ENCODE measurements at regions of chr1 and their contacts with region 1.

Region 1: DNA sequence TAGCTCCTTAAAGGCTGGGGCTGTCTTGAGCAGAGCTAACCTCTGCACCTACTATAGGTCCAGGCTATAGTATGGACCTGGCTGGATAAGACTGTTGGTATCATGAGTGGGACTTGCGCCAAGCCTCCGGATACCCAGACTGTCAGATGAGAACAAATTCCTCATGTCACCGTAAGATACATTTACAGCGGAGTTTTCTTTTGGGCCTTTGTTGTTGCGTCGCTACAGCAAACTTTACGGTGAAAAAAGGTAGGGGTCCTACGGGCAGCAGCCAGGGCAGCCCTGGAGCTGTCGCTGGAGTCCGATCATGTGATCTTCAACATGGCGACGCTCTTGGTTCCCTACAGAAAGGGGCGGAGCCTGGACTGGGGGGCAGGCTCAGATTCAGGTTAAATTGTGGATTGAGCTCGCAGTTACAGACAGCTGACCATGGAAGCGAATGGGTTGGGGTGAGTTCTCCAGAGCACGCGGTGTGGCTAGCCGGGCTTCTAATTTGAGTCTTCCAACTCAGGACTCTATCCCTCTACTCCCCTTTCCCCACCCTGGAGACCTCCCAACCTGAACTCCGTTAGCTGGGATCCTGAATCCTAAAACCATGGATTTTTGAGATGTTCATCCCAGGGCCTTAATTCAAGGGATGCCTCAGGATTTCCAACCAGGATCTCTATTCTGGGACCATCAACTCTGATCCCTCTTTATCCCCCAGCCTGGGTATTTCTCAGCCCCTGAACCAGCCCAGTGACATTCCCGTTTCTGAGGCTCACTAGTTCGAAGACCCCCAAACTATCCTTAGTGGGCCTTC is at the start of gene UROD:
- DNase-seq: peak; percentile 94
- H3K4me3 Mint-ChIP-seq: peak within 1 kb of the TSS; percentile 81
- H3K27ac Mint-ChIP-seq: peak within 1 kb of the TSS; percentile 85
- H3K4me1 Mint-ChIP-seq: peaks cover 47% of the 10 kb centered on the region
- H3K27me3 Mint-ChIP-seq: no peaks in the 10 kb centered on the region
- total RNA-seq, gene UROD: 67.1 to 74.9 TPM

Region 2: DNA sequence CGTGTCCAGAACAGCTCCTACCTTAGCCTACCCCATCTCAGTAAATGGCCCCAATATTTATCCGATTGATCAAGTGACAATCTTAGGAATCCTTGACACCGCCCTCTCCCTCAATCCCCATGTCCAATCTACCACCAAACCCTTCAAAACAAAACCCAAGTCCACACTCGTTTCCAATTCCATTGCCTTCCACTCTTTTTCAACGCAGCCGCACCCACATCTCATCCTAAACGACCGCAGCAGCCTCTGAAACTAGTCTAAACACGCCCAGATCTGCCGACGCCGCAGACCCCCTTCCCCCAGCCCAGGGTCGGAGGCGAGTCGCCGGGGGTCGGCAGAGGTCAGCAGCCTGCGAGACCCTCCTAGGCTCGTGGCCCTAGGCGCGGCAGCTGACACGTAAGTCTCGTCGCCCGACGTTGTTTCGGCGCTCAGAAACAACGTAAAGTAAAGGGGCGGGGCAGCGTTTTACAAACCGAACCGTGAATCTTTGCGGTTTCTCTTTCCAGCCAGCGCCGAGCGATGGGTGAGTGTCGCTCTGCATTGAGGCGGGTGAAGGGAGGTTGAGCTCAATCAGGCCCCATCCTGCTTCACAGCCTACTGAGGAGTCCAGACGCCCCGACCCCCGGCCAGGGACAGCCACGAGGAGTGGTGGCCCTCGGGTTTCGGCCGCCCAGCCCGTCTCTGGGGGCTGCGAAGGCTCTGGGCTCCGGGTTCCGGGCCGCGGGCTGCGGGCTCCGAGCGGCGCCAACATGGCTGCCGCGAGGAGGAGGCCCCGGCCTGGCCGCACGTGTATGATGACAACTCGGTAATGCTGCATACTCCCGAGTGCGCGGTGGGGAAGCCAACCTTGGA is 236.7 kb before region 1 on chr1 and contains the start of gene RPS8:
- CTCF ChIA-PET with region 1: no interaction called
- POLR2A ChIA-PET with region 1: interaction called, 41 read pairs
- DNase-seq: peak; percentile 93
- H3K4me3 Mint-ChIP-seq: peak within 1 kb of the TSS; percentile 90
- H3K27ac Mint-ChIP-seq: peak within 1 kb of the TSS; percentile 90
- H3K4me1 Mint-ChIP-seq: peaks cover 35% of the 10 kb centered on the region
- H3K27me3 Mint-ChIP-seq: no peaks in the 10 kb centered on the region
- total RNA-seq, gene RPS8: 1,610 to 1,658 TPM

Region 3: GRCh38 chr1:44799770-44800584 is 212.1 kb before region 1 on chr1 and contains the start of gene PLK3:
- CTCF ChIA-PET with region 1: interaction called, 27 read pairs
- POLR2A ChIA-PET with region 1: interaction called, 40 read pairs
- DNase-seq: peak; percentile 98
- H3K4me3 Mint-ChIP-seq: peak within 1 kb of the TSS; percentile 90
- H3K27ac Mint-ChIP-seq: peak within 1 kb of the TSS; percentile 98
- H3K4me1 Mint-ChIP-seq: peaks cover 47% of the 10 kb centered on the region
- H3K27me3 Mint-ChIP-seq: no peaks in the 10 kb centered on the region
- total RNA-seq, gene PLK3: 62.8 to 63.5 TPM

Region 4: DNA sequence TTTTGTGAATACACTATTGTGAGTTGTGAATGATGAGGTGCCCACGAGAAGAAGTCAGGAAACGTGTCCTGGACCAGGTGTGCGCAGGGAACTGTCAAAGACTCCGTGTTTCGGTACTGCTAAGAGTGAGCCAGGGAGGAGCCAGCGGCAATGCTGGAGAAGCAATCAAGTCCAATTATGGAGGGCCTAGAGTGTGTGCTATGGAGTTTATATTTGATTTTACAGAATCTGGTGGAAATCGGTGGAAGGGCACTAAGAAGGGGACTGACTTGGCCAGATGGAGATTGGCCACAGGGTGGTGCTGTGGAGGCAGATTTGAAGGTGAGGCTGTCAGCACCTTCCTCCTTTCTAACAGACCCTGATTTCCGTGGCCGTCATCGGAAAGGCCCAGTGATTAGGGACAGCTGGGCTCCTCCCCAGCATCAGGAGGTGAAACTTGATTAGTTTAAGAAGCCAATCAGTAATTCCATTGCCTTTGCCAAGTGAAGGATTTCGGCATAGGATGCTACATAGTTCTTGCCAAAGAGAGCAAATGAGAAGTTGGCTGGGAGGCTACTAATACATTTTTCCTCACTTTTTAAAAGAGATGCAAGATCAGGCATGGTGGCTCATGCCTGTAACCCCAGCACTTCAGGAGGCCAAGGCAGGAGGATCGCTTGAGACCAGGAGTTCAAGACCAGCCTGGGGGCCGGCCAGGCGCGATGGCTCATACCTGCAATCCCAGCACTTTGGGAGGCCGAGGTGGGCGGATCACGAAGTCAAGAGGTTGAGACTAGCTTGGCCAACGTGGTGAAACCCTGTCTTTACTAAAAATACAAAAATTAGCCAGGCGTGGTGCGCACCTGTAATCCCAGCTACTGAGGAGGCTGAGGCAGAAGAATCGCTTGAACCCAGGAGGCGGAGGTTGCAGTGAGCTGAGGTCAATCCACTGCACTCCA is 176.0 kb before region 1 on chr1:
- CTCF ChIA-PET with region 1: interaction called, 16 read pairs
- POLR2A ChIA-PET with region 1: interaction called, 6 read pairs
- DNase-seq: peak; percentile 90
- H3K4me3 Mint-ChIP-seq: no peak overlapping the region
- H3K27ac Mint-ChIP-seq: no peak overlapping the region
- H3K4me1 Mint-ChIP-seq: peaks cover 7% of the 10 kb centered on the region
- H3K27me3 Mint-ChIP-seq: peaks cover under 1% of the 10 kb centered on the region

Region 5: DNA sequence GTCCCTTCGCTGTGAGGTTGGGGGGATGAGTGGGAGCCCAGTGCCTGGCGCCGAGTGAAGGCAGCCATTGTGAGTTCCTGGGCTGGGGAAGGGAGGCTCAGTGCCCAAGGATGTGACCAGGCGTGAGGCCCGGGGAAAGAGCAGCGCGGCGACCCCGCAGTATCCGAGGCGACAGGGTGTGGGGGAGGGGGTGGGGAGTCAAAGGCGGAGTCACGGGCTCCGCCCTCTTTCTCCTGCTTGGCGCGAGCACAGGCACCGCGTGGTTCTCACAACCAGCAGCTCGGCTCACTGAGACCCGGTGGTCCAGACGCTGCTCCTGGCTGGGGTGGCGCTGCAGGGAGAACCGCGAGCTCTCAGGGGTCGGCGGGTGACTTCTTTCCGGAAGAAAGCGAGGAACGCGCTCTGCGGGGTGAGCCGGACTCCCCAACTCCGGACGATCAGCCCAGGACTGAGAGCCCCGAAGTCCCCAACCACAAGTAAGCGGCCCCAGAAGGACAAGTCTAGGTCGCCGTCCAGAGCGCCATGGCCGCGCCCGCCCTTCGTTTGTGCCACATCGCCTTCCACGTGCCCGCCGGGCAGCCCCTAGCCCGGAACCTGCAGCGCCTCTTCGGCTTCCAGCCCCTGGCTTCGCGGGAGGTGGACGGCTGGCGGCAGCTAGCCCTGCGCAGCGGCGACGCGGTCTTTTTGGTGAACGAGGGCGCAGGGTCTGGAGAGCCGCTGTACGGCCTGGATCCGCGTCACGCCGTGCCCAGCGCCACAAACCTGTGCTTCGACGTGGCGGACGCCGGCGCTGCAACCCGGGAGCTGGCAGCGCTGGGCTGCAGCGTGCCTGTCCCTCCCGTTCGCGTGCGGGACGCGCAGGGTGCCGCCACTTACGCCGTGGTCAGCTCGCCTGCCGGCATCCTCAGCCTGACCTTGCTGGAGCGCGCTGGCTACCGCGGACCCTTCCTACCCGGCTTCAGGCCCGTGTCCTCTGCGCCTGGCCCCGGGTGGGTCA is 314.9 kb after region 1 on chr1 and contains the start of gene HPDL:
- CTCF ChIA-PET with region 1: interaction called, 3 read pairs
- POLR2A ChIA-PET with region 1: interaction called, 13 read pairs
- DNase-seq: peak; percentile 64
- H3K4me3 Mint-ChIP-seq: peak within 1 kb of the TSS; percentile 74
- H3K27ac Mint-ChIP-seq: peak within 1 kb of the TSS; percentile 16
- H3K4me1 Mint-ChIP-seq: peaks cover 25% of the 10 kb centered on the region
- H3K27me3 Mint-ChIP-seq: no peaks in the 10 kb centered on the region
- total RNA-seq, gene HPDL: 5.5 to 5.6 TPM

Region 6: GRCh38 chr1:45521398-45522323 is 509.6 kb after region 1 on chr1 and contains the start of gene PRDX1:
- CTCF ChIA-PET with region 1: no interaction called
- POLR2A ChIA-PET with region 1: interaction called, 21 read pairs
- DNase-seq: peak; percentile 97
- H3K4me3 Mint-ChIP-seq: peak within 1 kb of the TSS; percentile 95
- H3K27ac Mint-ChIP-seq: peak within 1 kb of the TSS; percentile 88
- H3K4me1 Mint-ChIP-seq: peaks cover 49% of the 10 kb centered on the region
- H3K27me3 Mint-ChIP-seq: peaks cover 10% of the 10 kb centered on the region
- total RNA-seq, gene PRDX1: 296 to 309 TPM